GM18951 (cell line): ENCODE measurements at regions of chr20 and their contacts with region 1.

Region 1: GRCh38 chr20:44924570-44924969 is 14.7 kb downstream of the PABPC1L start:
- POLR2A ChIP-seq: no peak

Region 2: GRCh38 chr20:43893930-43894329 is 1030.6 kb before region 1 on chr20:
- in situ Hi-C with region 1: no loop called
- POLR2A ChIP-seq: no peak

Region 3: DNA sequence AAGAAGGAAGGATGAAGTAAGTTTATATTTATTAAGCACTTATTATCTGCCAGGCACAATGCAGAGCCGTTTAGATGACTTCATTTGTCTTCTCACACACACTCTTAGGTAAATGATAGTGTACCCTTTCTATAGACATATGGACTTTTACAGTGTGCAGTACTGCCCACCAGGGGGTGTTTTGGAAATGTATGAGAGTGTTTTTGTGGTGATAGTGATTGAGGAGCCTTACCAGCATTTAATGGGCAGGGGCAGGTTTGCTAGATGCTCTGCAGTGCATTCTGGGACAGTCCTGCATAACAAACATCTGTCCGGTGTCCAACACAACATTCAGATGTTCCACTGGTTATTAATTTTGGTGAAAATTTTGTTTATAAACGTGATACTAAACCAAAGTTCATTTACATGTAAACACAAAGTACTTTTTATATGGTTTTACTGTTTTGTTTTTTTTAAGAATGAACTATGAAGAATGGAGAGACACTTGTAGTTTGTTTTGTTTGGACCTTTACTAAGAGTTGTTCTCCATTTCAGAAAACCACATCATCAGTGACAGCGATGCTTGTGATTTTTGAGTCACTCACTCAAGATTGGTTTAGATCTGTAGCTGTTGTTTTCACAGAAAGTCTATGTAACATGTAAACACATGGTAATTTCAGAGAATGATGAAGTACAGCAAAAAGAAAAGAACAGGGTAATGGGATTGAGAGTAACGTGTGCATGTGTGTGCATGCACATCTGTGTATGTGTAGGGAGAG is 156.5 kb after region 1 on chr20:
- in situ Hi-C with region 1: no loop called
- POLR2A ChIP-seq: no peak

Region 4: GRCh38 chr20:45100563-45101245 is 176.1 kb after region 1 on chr20 and contains the start of gene KCNS1:
- in situ Hi-C with region 1: loop called (anchors 10 kb)
- POLR2A ChIP-seq: no peak

Region 5: DNA sequence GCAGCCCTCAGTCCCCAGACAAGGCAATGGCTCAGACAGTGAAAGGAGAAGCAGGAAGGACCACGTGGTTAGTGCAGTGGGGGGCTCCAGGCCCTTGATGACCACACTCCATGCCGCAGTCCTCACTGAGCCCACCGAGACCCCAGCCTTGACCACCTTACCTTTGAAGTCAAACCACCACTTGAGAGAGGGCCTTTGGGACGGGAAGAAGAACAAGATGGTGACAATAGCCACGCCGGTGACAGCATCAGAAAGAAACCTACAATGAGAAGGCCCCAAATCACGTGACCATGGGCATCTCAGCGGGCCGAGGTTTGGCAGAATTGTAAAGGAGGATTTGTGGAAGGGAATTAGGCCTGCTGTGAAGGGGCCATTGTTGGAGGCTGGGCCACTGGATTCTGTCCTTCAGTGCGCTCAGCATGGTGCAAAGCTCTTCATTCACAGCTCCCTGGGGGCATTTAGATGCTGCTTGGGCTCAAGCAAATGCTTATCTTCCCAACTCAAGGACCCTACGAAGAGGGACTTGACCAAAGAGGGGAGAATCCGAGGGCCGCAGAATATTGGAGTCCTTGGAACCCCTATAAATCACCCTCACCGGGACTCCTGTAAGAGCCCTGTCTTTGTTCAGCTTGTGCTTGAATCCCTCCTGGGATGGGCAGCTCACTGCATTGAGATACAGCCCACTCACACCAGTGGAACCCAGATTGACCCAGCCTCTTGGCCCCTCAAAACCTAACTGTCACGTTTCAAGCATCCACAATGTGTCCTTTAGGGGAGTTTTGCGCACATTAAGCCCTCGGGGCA is 1659.0 kb after region 1 on chr20:
- in situ Hi-C with region 1: no loop called
- POLR2A ChIP-seq: no peak